CD4-positive, alpha-beta T cell (primary cell): ENCODE measurements at regions of chr5 and their contacts with region 1.

Region 1: GRCh38 chr5:96807075-96807654 is 580 bp downstream of the ERAP1 start:
- DNase-seq: peak in 4 of 14 experiments; percentile 37 to 52 (median 38)
- ATAC-seq: peak; percentile 7
- H3K4me3 ChIP-seq: peak overlapping the region; percentile 79
- H3K4me3 Mint-ChIP-seq: peak overlapping the region; percentile 98
- H3K27ac ChIP-seq: peak overlapping the region; percentile 91 to 96
- H3K27ac Mint-ChIP-seq: peak overlapping the region; percentile 99
- H3K4me1 ChIP-seq: peaks cover 62% of the 10 kb centered on the region
- H3K4me1 Mint-ChIP-seq: peaks cover 86% of the 10 kb centered on the region
- H3K27me3 ChIP-seq: no peaks in the 10 kb centered on the region
- H3K27me3 Mint-ChIP-seq: peaks cover 5% of the 10 kb centered on the region
- CTCF ChIP-seq: no peak

Region 2: GRCh38 chr5:96662725-96663513 is 144.2 kb before region 1 on chr5:
- CTCF ChIA-PET with region 1: no interaction called
- POLR2A ChIA-PET with region 1: interaction called, 24 read pairs
- intact Hi-C with region 1: loop called in 1 of 2 experiments (anchors 5 kb)
- DNase-seq: peak; percentile 55 to 93 (median 80)
- ATAC-seq: peak; percentile 72
- H3K4me3 ChIP-seq: peak overlapping the region; percentile 88
- H3K4me3 Mint-ChIP-seq: peak overlapping the region; percentile 96
- H3K27ac ChIP-seq: peak overlapping the region; percentile 68 to 77
- H3K27ac Mint-ChIP-seq: peak overlapping the region; percentile 95
- H3K4me1 ChIP-seq: peaks cover 25% of the 10 kb centered on the region
- H3K4me1 Mint-ChIP-seq: peaks cover 57% of the 10 kb centered on the region
- H3K27me3 ChIP-seq: no peaks in the 10 kb centered on the region
- H3K27me3 Mint-ChIP-seq: no peaks in the 10 kb centered on the region
- CTCF ChIP-seq: no peak

Region 3: GRCh38 chr5:96752341-96753016 is 54.7 kb before region 1 on chr5:
- CTCF ChIA-PET with region 1: interaction called, 3 read pairs
- POLR2A ChIA-PET with region 1: interaction called, 7 read pairs
- intact Hi-C with region 1: loop called in 1 of 2 experiments (anchors 5 kb)
- DNase-seq: peak in 6 of 14 experiments; percentile 17 to 82 (median 68)
- ATAC-seq: peak; percentile 67
- H3K4me3 ChIP-seq: no peak overlapping the region
- H3K4me3 Mint-ChIP-seq: no peak overlapping the region
- H3K27ac ChIP-seq: no peak overlapping the region
- H3K27ac Mint-ChIP-seq: no peak overlapping the region
- H3K4me1 ChIP-seq: no peaks in the 10 kb centered on the region
- H3K4me1 Mint-ChIP-seq: no peaks in the 10 kb centered on the region
- H3K27me3 ChIP-seq: no peaks in the 10 kb centered on the region
- H3K27me3 Mint-ChIP-seq: no peaks in the 10 kb centered on the region
- CTCF ChIP-seq: peak; percentile 83

Region 4: DNA sequence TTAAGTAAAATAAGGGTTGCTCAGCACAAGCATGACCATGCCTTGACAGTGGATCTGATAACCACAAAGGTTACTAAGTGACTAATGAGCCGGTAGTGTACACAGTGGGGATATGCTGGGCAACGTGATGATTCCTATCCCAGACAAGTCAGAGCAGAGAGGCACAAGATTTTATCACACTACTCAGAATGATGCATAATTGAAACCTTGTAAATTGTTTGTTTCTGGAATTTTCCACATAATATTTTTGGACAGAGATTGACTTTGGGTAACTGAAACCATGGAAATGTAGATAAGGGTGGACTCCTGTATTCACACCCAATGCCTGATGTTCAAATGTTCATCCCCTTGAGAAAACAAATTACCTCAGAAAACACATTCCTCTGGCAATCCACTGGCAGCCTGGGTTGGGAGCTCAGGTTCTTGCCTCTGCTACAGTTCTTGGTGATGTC is 16.8 kb after region 1 on chr5:
- CTCF ChIA-PET with region 1: interaction called, 5 read pairs
- POLR2A ChIA-PET with region 1: interaction called, 43 read pairs
- intact Hi-C with region 1: loop called in 1 of 2 experiments (anchors 2 kb)
- DNase-seq: no peak
- ATAC-seq: peak; percentile 30
- H3K4me3 ChIP-seq: no peak overlapping the region
- H3K4me3 Mint-ChIP-seq: no peak overlapping the region
- H3K27ac ChIP-seq: no peak overlapping the region
- H3K27ac Mint-ChIP-seq: no peak overlapping the region
- H3K4me1 ChIP-seq: peaks cover 16% of the 10 kb centered on the region
- H3K4me1 Mint-ChIP-seq: peaks cover 49% of the 10 kb centered on the region
- H3K27me3 ChIP-seq: no peaks in the 10 kb centered on the region
- H3K27me3 Mint-ChIP-seq: no peaks in the 10 kb centered on the region
- CTCF ChIP-seq: no peak

Region 5: DNA sequence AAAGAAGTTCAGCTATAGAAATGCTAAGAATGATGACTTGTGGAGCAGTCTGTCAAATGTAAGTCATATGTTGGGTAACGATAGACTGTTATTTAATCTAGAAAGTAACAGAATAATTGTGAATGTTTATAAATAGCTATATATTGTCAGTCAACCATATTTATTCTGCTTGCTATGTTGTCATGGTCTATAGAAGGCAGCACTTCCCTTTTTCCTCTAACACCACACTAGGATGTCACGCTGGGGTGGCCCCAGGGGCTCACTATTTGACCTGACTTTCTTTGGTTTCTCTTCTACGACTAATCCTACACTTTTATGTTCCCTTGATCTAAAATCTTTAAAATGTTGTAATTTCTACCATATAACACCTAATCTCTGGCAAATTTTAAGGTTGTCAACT is 89.6 kb after region 1 on chr5:
- CTCF ChIA-PET with region 1: no interaction called
- POLR2A ChIA-PET with region 1: interaction called, 21 read pairs
- intact Hi-C with region 1: no loop called
- DNase-seq: peak in 3 of 14 experiments; percentile 41 to 52 (median 46)
- ATAC-seq: peak; percentile 32
- H3K4me3 ChIP-seq: peak overlapping the region; percentile 33
- H3K4me3 Mint-ChIP-seq: peak overlapping the region; percentile 83
- H3K27ac ChIP-seq: peak overlapping the region; percentile 78 to 79
- H3K27ac Mint-ChIP-seq: peak overlapping the region; percentile 91
- H3K4me1 ChIP-seq: peaks cover 8% of the 10 kb centered on the region
- H3K4me1 Mint-ChIP-seq: peaks cover 53% of the 10 kb centered on the region
- H3K27me3 ChIP-seq: no peaks in the 10 kb centered on the region
- H3K27me3 Mint-ChIP-seq: no peaks in the 10 kb centered on the region
- CTCF ChIP-seq: no peak

Region 6: GRCh38 chr5:98773464-98774191 is 1966.5 kb after region 1 on chr5 and contains the start of gene RGMB:
- CTCF ChIA-PET with region 1: no interaction called
- POLR2A ChIA-PET with region 1: no interaction called
- intact Hi-C with region 1: loop called in 1 of 2 experiments (anchors 10 kb)
- DNase-seq: peak; percentile 79 to 94 (median 88)
- ATAC-seq: peak; percentile 85
- H3K4me3 ChIP-seq: peak within 1 kb of the TSS; percentile 74
- H3K4me3 Mint-ChIP-seq: peak within 1 kb of the TSS; percentile 99
- H3K27ac ChIP-seq: peak within 1 kb of the TSS; percentile 10 to 61
- H3K27ac Mint-ChIP-seq: peak within 1 kb of the TSS; percentile 87
- H3K4me1 ChIP-seq: peaks cover 45% of the 10 kb centered on the region
- H3K4me1 Mint-ChIP-seq: peaks cover 72% of the 10 kb centered on the region
- H3K27me3 ChIP-seq: peaks cover 0 to 12% of the 10 kb centered on the region in 2 experiments
- H3K27me3 Mint-ChIP-seq: peaks cover 14% of the 10 kb centered on the region
- CTCF ChIP-seq: no peak
- total RNA-seq, gene RGMB: 15.8 to 15.9 TPM